ENCODE measurements at regions of chr15 and their contacts with region 1.

Region 1: DNA sequence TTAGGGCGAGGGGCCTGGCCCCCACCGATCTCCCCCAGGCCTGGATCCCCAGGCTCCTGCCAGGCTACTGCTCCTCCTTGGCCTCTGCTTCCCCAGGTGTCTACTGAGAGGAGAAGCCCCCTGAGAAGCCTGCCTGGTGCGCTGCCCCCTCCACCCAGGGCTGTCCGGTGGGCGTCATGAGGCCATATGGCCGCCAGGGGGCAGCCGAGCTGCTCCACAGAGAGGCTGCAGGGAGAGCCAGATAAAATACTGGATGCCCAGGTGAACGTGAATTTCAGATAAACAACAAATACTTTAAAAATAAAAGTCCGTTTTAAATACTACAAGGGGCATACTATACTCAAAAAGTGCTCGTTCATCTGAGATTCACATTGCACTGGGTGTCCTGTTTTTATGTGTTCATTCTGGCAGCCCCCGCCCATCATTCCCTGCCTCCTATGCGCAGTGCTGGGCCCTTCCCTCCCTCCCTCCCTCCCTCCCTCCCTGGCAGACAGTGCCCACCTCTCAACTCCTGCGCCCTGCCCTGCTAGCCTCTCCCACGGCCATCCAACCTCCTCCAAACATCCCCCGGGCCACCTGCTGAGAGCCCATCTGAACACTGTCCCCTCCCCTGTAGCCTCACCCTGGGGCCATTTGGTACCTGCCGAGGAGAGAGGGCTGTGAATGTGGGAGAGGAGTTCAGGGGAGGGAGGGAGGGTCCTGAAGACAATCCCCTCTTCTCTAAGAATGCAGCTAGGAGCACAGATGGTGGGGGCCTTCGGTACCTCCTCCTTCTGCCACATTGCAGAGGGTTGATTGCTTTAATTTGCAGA is 29.6 kb downstream of the PSTPIP1 start:
- DNase-seq: peak; percentile 46 to 79 (median 62)
- ATAC-seq: peak; percentile 24
- H3K4me3 ChIP-seq: no peak overlapping the region
- H3K4me3 Mint-ChIP-seq: peak overlapping the region; percentile 48
- H3K27ac ChIP-seq: peak overlapping the region in 1 of 2 donors; percentile 49
- H3K27ac Mint-ChIP-seq: peak overlapping the region; percentile 70
- H3K4me1 ChIP-seq: peaks cover 77% of the 10 kb centered on the region
- H3K4me1 Mint-ChIP-seq: peaks cover 48% of the 10 kb centered on the region
- H3K27me3 ChIP-seq: no peaks in the 10 kb centered on the region
- H3K27me3 Mint-ChIP-seq: no peaks in the 10 kb centered on the region
- CTCF ChIP-seq: peak; percentile 95

Region 2: GRCh38 chr15:76905013-76905839 is 119.3 kb before region 1 on chr15 and contains the start of gene SCAPER:
- CTCF ChIA-PET with region 1: interaction called, 7 read pairs
- POLR2A ChIA-PET with region 1: no interaction called
- intact Hi-C with region 1: loop called (anchors 2 to 5 kb)
- DNase-seq: peak; percentile 77 to 96 (median 90)
- ATAC-seq: peak; percentile 89
- H3K4me3 ChIP-seq: peak within 1 kb of the TSS; percentile 83
- H3K4me3 Mint-ChIP-seq: peak within 1 kb of the TSS; percentile 96
- H3K27ac ChIP-seq: peak within 1 kb of the TSS; percentile 60 to 75
- H3K27ac Mint-ChIP-seq: peak within 1 kb of the TSS; percentile 95
- H3K4me1 ChIP-seq: peaks cover 25% of the 10 kb centered on the region
- H3K4me1 Mint-ChIP-seq: peaks cover 31% of the 10 kb centered on the region
- H3K27me3 ChIP-seq: no peaks in the 10 kb centered on the region
- H3K27me3 Mint-ChIP-seq: no peaks in the 10 kb centered on the region
- CTCF ChIP-seq: no peak
- total RNA-seq, gene SCAPER: 40.3 to 41.2 TPM

Region 3: GRCh38 chr15:76973362-76973743 is 51.1 kb before region 1 on chr15:
- CTCF ChIA-PET with region 1: interaction called, 30 read pairs
- POLR2A ChIA-PET with region 1: interaction called, 3 read pairs
- intact Hi-C with region 1: loop called in 1 of 2 experiments (anchors 2 kb)
- DNase-seq: peak; percentile 50 to 83 (median 60)
- ATAC-seq: peak; percentile 81
- H3K4me3 ChIP-seq: no peak overlapping the region
- H3K4me3 Mint-ChIP-seq: no peak overlapping the region
- H3K27ac ChIP-seq: no peak overlapping the region
- H3K27ac Mint-ChIP-seq: no peak overlapping the region
- H3K4me1 ChIP-seq: peaks cover 17% of the 10 kb centered on the region
- H3K4me1 Mint-ChIP-seq: no peaks in the 10 kb centered on the region
- H3K27me3 ChIP-seq: no peaks in the 10 kb centered on the region
- H3K27me3 Mint-ChIP-seq: no peaks in the 10 kb centered on the region
- CTCF ChIP-seq: peak; percentile 76

Region 4: GRCh38 chr15:77013776-77014131 is 10.7 kb before region 1 on chr15:
- CTCF ChIA-PET with region 1: interaction called, 6 read pairs
- POLR2A ChIA-PET with region 1: interaction called, 15 read pairs
- intact Hi-C with region 1: no loop called
- DNase-seq: peak; percentile 52 to 92 (median 82)
- ATAC-seq: peak; percentile 85
- H3K4me3 ChIP-seq: peak overlapping the region; percentile 21
- H3K4me3 Mint-ChIP-seq: peak overlapping the region; percentile 88
- H3K27ac ChIP-seq: peak overlapping the region; percentile 50 to 76
- H3K27ac Mint-ChIP-seq: peak overlapping the region; percentile 98
- H3K4me1 ChIP-seq: peaks cover 99% of the 10 kb centered on the region
- H3K4me1 Mint-ChIP-seq: peaks cover 85% of the 10 kb centered on the region
- H3K27me3 ChIP-seq: no peaks in the 10 kb centered on the region
- H3K27me3 Mint-ChIP-seq: no peaks in the 10 kb centered on the region
- CTCF ChIP-seq: no peak

Measured in CD4-positive, alpha-beta T cell (primary cell).